Endothelial cell of umbilical vein (primary cell): ENCODE measurements at regions of chr22 and their contacts with region 1.

Region 1: GRCh38 chr22:35430897-35431322 is 31.0 kb downstream of the MCM5 start:
- DNase-seq: peak; percentile 90
- H3K4me3 ChIP-seq: no peak overlapping the region
- H3K27ac ChIP-seq: peak overlapping the region; percentile 23
- H3K4me1 ChIP-seq: no peaks in the 10 kb centered on the region
- H3K27me3 ChIP-seq: no peaks in the 10 kb centered on the region
- CTCF ChIP-seq: peak; percentile 97 to 98
- POLR2A ChIP-seq: no peak

Region 2: GRCh38 chr22:35446365-35446764 is 15.5 kb after region 1 on chr22:
- CTCF ChIA-PET with region 1: interaction called, 12 read pairs
- POLR2A ChIA-PET with region 1: no interaction called
- dilution Hi-C with region 1: no loop called
- intact Hi-C with region 1: no loop called
- DNase-seq: peak; percentile 50
- H3K4me3 ChIP-seq: no peak overlapping the region
- H3K27ac ChIP-seq: no peak overlapping the region
- H3K4me1 ChIP-seq: peaks cover 12% of the 10 kb centered on the region
- H3K27me3 ChIP-seq: no peaks in the 10 kb centered on the region
- CTCF ChIP-seq: no peak
- POLR2A ChIP-seq: no peak

Region 3: GRCh38 chr22:35539910-35540594 is 109.1 kb after region 1 on chr22:
- CTCF ChIA-PET with region 1: interaction called, 12 read pairs
- POLR2A ChIA-PET with region 1: no interaction called
- dilution Hi-C with region 1: no loop called
- intact Hi-C with region 1: no loop called
- DNase-seq: no peak
- H3K4me3 ChIP-seq: peak overlapping the region in 2 of 3 experiments; percentile 24 to 41
- H3K27ac ChIP-seq: no peak overlapping the region
- H3K4me1 ChIP-seq: peaks cover 14% of the 10 kb centered on the region
- H3K27me3 ChIP-seq: peaks cover 24 to 26% of the 10 kb centered on the region in 2 experiments
- CTCF ChIP-seq: no peak
- POLR2A ChIP-seq: no peak

Region 4: DNA sequence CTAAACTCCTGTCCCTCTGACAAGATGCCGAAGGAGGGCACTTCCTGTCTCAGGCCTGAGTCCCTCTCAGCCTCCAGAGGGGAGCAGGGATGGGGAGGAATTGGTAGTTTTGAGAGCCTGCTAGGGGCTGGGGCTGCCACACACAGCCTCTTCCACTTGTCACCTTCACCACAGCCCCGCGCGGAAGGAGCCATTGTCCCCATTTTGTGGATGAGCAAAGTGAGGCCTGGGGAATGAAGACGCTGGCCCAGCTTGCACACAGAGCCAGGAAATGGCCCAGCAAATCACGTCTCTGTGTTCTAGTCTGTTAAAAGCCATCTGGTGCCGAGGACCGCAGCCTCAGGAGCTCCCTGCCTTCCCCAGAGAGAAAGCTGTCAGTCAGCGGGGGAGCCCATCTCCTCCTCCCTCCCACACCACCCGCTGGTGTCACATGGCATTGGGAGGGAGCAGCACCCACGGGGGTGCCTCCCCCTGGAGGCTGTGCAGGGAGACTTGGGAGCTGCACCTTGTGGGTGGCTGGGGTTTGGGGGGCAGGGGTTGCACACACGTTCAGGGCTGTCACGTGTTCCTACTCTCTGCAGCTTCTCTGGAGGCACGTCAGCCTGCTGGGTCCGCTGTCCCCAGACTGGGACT is 144.3 kb after region 1 on chr22:
- CTCF ChIA-PET with region 1: interaction called, 196 read pairs
- POLR2A ChIA-PET with region 1: no interaction called
- dilution Hi-C with region 1: no loop called
- intact Hi-C with region 1: no loop called
- DNase-seq: no peak
- H3K4me3 ChIP-seq: no peak overlapping the region
- H3K27ac ChIP-seq: no peak overlapping the region
- H3K4me1 ChIP-seq: no peaks in the 10 kb centered on the region
- H3K27me3 ChIP-seq: peaks cover 2 to 3% of the 10 kb centered on the region in 2 experiments
- CTCF ChIP-seq: no peak
- POLR2A ChIP-seq: no peak

Region 5: DNA sequence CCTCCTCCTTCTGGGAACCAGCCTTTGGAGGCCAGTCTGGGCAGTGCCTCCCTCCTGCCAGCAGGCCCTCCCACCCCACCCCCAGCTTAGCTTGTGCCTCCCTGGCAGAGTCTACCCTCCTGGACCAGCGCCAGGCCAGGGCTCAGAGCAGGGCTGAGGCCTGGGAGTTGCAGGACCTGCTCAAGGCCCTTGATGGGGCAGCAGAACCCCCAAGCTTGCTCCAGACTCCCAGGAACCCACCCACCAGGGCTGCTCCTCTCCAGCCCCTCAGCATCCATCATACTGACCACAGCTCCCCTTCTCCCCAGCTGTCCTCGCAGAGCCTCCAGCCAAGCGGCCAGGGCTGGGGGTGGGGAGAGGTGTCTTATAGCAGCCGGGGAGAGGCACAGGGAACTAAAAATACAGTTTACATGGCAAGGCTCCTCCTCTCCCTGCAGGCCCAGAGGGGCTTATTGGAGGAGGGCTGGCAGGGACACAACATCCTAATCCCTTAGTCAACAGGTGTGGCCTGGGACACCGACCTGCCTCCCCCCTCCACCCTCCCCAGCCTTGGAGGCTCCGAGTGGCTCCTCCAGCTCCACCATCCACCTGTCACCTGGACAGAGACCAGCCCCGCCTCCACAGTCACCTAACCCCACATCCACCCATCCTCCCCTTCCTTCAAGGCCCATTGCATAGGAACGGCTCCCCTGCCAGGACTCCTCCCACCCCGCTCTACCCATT is 191.4 kb after region 1 on chr22:
- CTCF ChIA-PET with region 1: interaction called, 40 read pairs
- POLR2A ChIA-PET with region 1: no interaction called
- dilution Hi-C with region 1: no loop called
- intact Hi-C with region 1: loop called (anchors 1 kb)
- DNase-seq: no peak
- H3K4me3 ChIP-seq: no peak overlapping the region
- H3K27ac ChIP-seq: no peak overlapping the region
- H3K4me1 ChIP-seq: no peaks in the 10 kb centered on the region
- H3K27me3 ChIP-seq: peaks cover 3 to 4% of the 10 kb centered on the region in 2 experiments
- CTCF ChIP-seq: no peak
- POLR2A ChIP-seq: no peak